ENCODE measurements at regions of chr5 and their contacts with region 1.

Region 1: GRCh38 chr5:81851481-81852178 is 100.7 kb upstream of the SSBP2 start:
- DNase-seq: peak; percentile 97 to 99 (median 98)
- ATAC-seq: peak; percentile 99
- H3K4me3 ChIP-seq: no peak overlapping the region
- H3K4me1 ChIP-seq: peaks cover 22% of the 10 kb centered on the region
- CTCF ChIP-seq: no peak

Region 2: GRCh38 chr5:81425569-81425968 is 426.1 kb before region 1 on chr5:
- intact Hi-C with region 1: loop called in 1 of 2 experiments (anchors 10 kb)
- DNase-seq: no peak
- ATAC-seq: no peak
- H3K4me3 ChIP-seq: no peak overlapping the region
- H3K4me1 ChIP-seq: no peaks in the 10 kb centered on the region
- CTCF ChIP-seq: no peak

Region 3: GRCh38 chr5:81506900-81507588 is 344.6 kb before region 1 on chr5:
- intact Hi-C with region 1: loop called (anchors 10 kb)
- DNase-seq: peak in 1 of 3 donors; percentile 67
- ATAC-seq: peak; percentile 93
- H3K4me3 ChIP-seq: no peak overlapping the region
- H3K4me1 ChIP-seq: no peaks in the 10 kb centered on the region
- CTCF ChIP-seq: peak; percentile 55

Region 4: GRCh38 chr5:81513982-81514381 is 337.6 kb before region 1 on chr5:
- intact Hi-C with region 1: loop called (anchors 10 kb)
- DNase-seq: no peak
- ATAC-seq: no peak
- H3K4me3 ChIP-seq: no peak overlapping the region
- H3K4me1 ChIP-seq: no peaks in the 10 kb centered on the region
- CTCF ChIP-seq: no peak

Region 5: DNA sequence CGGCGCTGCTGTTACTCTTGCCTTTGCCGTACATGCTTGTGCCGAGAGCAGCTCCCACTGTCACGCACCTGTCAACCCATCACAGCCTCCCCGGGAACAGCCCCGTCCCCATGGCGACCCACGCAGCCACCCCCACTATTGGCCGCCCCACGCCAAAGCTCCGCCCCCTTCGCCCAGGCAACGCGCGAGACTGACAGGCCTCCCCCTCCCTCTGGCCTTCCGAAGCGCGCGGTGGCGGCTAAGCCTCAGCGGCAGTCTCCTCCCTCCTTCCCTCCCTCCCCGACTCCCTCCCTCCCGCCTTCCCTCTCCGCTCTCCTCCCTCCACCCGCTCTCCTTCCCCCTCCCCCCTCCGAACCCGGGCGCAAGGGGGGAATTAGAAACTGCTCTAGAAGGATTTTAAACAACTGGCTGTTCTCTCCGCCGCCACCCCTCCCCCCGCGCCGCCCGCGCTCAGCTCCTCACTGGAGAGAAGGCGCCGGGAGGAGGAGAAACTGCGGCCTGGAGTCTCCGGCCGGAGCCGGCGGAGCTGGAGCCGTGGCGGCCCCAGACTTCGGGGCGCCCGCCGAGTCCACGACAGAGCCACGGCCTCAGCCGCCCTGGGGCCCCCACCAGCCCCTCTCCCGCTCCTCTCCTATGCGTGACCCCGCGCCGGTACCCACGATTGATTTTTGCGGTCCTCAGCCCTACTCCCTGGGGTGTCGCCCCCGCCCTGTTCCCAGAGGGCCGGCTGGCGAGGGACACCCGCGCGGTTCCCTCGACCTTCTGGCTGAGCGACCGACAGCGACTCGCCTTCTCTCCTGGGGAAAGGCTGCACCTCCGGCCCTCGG is 100.4 kb before region 1 on chr5 and contains the start of gene SSBP2:
- intact Hi-C with region 1: loop called (anchors 2 to 5 kb)
- DNase-seq: peak; percentile 99 to 100 (median 100)
- ATAC-seq: peak; percentile 94
- H3K4me3 ChIP-seq: peak within 1 kb of the TSS; percentile 51
- H3K4me1 ChIP-seq: peaks cover 11% of the 10 kb centered on the region
- CTCF ChIP-seq: no peak
- total RNA-seq, gene SSBP2: 17.5 to 77.9 (median 20.9) TPM

Region 6: DNA sequence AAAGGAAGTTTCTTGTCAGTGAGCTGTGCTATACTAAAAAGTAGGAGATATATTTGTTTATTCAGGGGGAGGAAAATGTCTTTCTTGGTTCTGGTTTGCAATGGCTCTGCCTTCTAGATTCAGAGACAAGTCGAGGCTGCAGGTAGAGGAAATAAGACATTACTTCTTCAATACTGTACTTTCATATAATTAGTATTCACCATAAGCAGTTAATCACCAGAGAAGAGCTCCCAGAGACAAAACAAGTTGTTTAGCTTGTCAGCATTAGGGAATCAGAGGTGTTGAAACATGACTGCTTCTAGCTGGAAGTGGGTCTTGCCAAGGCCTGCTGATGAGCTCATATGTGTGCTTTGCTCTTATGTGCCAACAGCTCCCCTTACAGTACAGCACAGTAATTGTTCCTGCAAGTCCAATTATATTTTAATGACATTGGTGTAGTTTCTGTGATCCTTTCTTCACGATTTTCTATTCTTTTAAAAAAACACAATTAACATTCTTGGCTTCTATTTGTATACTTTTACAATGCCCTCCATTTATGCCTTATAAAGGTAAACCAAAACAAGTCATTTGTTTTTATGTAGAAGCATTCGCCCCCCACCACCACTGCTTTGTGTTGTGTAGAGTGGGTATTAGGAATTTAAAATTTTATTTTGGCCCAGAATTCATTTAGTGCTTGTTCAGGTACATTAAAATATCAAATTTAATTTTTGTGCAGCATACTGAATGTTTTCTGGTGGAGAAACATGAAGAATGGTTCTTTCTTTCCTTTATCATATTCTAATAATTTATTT is 314.3 kb after region 1 on chr5:
- intact Hi-C with region 1: loop called in 1 of 2 experiments (anchors 10 kb)
- DNase-seq: peak in 1 of 3 donors; percentile 59
- ATAC-seq: peak; percentile 95
- H3K4me3 ChIP-seq: no peak overlapping the region
- H3K4me1 ChIP-seq: peaks cover 6% of the 10 kb centered on the region
- CTCF ChIP-seq: no peak

Region 7: GRCh38 chr5:82225525-82226172 is 374.0 kb after region 1 on chr5:
- intact Hi-C with region 1: no loop called
- DNase-seq: peak in 2 of 3 donors; percentile 41 to 83
- ATAC-seq: peak; percentile 91
- H3K4me3 ChIP-seq: no peak overlapping the region
- H3K4me1 ChIP-seq: no peaks in the 10 kb centered on the region
- CTCF ChIP-seq: peak; percentile 75

Measured in mucosa of descending colon (tissue), 3 donors.